ENCODE measurements at regions of chr19 and their contacts with region 1.

Region 1: DNA sequence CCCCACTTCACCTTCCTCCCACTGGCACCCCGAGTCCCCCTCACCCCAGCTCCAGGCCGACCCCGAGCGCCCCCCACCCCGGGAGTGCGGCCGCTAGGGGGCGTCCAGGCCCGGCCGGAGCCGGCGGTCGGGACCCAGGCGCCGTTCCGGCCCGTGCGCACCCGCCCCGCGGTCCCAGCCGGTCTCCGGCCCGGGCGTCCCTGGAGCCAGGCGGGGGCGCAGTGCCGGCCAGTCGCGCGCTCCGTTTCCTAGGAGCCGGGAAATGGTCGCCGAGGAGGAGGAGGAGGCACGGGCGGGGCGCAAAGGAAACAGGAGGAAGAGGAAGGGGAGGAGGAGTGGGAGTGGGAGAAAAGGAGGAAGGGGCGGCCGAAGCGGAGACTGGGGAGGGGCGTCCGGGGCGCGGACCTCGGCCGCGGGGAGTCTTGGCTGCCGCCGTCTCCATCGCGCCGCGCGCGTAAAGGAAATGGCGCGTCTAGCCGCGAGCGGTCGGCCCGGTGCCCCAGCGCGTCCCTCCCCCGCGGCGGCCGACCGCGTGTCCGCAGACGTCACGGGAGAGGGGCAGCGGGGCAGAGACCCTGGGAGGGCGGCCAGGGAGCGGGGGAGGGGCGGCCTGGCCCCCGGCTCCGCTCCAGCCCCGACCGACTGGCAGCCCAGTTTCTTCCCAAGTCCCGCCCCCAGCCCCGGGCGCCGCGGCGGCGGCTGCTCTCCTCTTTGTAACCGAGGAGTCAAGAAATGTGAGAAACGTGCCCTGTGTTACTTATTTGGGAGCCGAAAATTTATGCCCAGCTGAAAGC is 1.1 kb upstream of the KCTD15 start:
- DNase-seq: peak; percentile 64
- ATAC-seq: peak; percentile 64
- H3K4me3 Mint-ChIP-seq: peak overlapping the region; percentile 75
- H3K27ac Mint-ChIP-seq: peak overlapping the region; percentile 46
- H3K4me1 Mint-ChIP-seq: peaks cover 5% of the 10 kb centered on the region
- H3K27me3 Mint-ChIP-seq: peaks cover 19% of the 10 kb centered on the region
- CTCF ChIP-seq: no peak

Region 2: DNA sequence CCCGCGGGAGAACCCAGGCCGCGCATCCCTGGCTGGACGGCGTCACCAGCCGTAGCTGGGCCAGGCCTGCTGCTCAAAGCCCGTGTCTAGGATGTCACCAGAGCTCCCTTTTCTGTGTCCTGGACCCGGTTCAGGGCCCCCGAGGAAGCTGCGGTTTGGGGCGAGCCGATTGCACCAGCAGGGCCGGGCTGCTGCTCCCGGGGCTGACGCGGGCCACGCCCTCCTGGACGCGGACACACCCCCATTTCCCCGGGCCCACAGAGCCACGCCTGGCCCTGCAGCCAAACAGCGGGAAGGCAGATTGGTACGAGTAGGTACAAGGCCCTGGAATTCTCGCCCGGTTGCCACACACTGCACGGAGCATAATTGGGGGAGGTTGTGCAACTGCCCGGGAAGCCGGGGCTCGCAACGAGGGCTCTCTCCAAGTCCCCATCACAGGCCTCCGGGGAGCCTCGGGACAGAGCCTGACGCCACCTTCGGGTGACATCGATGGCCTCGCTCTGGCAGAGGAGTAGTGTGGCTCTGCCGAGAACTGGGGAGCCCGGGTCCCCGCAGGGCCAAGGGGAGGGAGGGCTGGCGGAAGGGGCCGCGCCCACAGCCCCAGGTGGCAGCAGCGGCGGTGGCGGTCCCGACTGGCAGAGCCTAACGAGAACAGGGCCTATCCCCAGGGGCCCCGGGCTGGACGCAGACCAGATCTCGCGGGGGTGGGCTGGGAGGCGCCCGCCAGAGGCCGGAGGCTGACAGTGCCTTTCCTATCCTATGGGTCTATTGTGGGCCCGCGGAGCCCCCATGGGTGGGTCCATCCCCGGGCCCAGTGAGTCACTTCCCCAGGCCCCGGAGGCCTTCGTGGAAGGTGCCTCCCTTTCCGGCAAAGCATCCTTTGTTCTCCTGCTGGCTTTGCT is 24.6 kb after region 1 on chr19:
- CTCF ChIA-PET with region 1: interaction called, 4 read pairs
- POLR2A ChIA-PET with region 1: interaction called, 3 read pairs
- intact Hi-C with region 1: loop called (anchors 2 kb)
- DNase-seq: peak; percentile 60
- ATAC-seq: peak; percentile 78
- H3K4me3 Mint-ChIP-seq: peak overlapping the region; percentile 85
- H3K27ac Mint-ChIP-seq: peak overlapping the region; percentile 41
- H3K4me1 Mint-ChIP-seq: peaks cover 36% of the 10 kb centered on the region
- H3K27me3 Mint-ChIP-seq: no peaks in the 10 kb centered on the region
- CTCF ChIP-seq: no peak

Region 3: DNA sequence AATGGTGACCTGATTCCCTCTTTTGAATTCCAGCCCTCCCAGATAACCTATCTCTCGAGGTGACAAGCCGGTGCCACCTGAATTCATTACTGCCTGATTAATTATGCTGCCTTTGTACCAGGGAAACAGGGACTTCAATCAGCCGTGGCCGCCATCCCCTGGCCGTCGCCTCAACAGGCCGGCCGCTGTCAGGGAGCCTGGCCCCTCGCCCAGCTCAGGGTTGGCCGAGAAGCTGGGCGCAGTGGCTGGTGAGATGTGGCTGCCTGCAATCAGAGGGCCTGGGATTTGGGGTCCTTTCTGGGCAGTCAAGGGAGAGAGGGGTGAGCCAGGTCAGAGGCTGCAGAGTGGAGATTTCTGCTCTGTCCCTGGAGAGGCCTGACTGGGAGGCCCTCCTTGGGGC is 92.3 kb after region 1 on chr19:
- CTCF ChIA-PET with region 1: no interaction called
- POLR2A ChIA-PET with region 1: no interaction called
- intact Hi-C with region 1: no loop called
- DNase-seq: no peak
- ATAC-seq: no peak
- H3K4me3 Mint-ChIP-seq: no peak overlapping the region
- H3K27ac Mint-ChIP-seq: no peak overlapping the region
- H3K4me1 Mint-ChIP-seq: peaks cover 2% of the 10 kb centered on the region
- H3K27me3 Mint-ChIP-seq: peaks cover 21% of the 10 kb centered on the region
- CTCF ChIP-seq: no peak

Region 4: DNA sequence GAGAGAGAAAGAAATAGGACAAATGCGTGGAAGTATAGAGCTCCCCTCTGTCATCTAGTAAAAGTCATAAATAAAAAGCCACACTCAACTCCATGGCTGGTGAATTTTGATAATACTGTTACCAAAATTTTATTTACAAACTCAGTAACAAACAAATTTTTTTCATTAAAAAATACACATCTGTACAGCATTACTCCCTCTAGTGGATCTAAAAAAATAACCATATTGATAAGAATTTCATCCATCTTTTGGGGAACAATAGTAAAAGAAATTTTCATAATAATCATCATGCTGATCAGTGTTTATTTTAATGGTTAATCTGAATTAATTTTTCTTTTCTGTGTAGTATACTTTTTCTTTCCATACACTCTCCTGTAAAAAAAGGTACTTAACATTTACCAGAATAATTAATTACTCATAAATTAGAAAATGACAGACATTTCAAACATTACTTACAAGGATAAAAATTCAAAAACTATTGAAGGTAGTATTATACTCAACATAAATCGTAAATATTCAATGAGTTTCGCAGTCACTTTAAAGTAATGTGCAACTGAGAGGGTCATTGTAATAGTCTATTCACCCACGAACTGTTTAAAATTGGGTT is 203.3 kb after region 1 on chr19:
- CTCF ChIA-PET with region 1: interaction called, 5 read pairs
- POLR2A ChIA-PET with region 1: no interaction called
- intact Hi-C with region 1: loop called (anchors 5 kb)
- DNase-seq: no peak
- ATAC-seq: no peak
- H3K4me3 Mint-ChIP-seq: no peak overlapping the region
- H3K27ac Mint-ChIP-seq: no peak overlapping the region
- H3K4me1 Mint-ChIP-seq: no peaks in the 10 kb centered on the region
- H3K27me3 Mint-ChIP-seq: peaks cover 14% of the 10 kb centered on the region
- CTCF ChIP-seq: no peak

Region 5: GRCh38 chr19:34096020-34096915 is 300.7 kb after region 1 on chr19:
- CTCF ChIA-PET with region 1: interaction called, 5 read pairs
- POLR2A ChIA-PET with region 1: no interaction called
- intact Hi-C with region 1: loop called (anchors 1 kb)
- DNase-seq: no peak
- ATAC-seq: no peak
- H3K4me3 Mint-ChIP-seq: no peak overlapping the region
- H3K27ac Mint-ChIP-seq: no peak overlapping the region
- H3K4me1 Mint-ChIP-seq: no peaks in the 10 kb centered on the region
- H3K27me3 Mint-ChIP-seq: peaks cover 17% of the 10 kb centered on the region
- CTCF ChIP-seq: peak; percentile 16

Region 6: DNA sequence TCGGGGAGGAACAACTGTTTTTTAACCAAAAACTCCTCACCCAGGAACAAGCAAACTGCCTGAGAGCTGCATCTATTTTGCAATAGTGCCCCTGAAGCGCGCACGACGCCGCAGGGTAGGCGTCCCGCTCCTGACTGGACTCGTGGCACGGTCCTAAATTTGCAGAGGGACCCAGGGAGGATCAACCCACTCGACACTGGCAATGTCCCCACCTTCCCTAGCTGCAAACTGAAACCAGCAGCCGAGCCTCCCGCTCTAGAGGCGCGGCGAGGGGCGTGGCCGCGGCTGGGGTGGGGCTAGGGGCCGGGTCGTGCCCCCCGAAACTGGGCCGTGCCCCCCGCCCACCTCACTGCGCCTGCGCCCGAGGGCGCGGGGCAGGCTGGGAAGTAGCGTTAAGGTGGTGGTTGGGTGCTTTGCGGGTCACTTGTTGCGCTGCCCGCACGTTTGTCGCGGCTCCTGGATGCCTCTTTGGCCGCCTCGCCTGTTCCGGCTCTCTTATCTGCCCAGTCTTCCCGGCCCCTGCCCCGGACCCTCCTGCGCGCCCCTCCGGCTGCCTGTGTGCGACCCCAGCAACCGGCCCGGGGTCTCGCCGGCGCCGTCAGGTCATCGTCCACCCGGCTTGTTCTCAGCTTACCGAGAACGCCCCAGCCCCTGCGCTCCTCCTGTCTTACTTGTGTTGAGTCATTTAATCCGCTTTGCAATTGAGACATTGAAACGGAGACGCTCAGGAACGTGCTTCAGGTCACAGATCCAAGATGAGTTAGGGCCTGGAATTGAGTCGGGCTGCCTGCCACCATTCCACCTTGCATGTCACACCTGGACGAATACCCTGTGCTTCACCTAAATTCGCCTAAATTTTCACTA is 338.9 kb after region 1 on chr19:
- CTCF ChIA-PET with region 1: no interaction called
- POLR2A ChIA-PET with region 1: interaction called, 6 read pairs
- intact Hi-C with region 1: loop called (anchors 1 kb)
- DNase-seq: peak; percentile 96
- ATAC-seq: peak; percentile 99
- H3K4me3 Mint-ChIP-seq: peak overlapping the region; percentile 93
- H3K27ac Mint-ChIP-seq: peak overlapping the region; percentile 91
- H3K4me1 Mint-ChIP-seq: peaks cover 5% of the 10 kb centered on the region
- H3K27me3 Mint-ChIP-seq: no peaks in the 10 kb centered on the region
- CTCF ChIP-seq: no peak

Region 7: GRCh38 chr19:34145741-34146202 is 350.2 kb after region 1 on chr19:
- CTCF ChIA-PET with region 1: interaction called, 3 read pairs
- POLR2A ChIA-PET with region 1: no interaction called
- intact Hi-C with region 1: loop called (anchors 5 kb)
- DNase-seq: no peak
- ATAC-seq: peak; percentile 65
- H3K4me3 Mint-ChIP-seq: no peak overlapping the region
- H3K27ac Mint-ChIP-seq: no peak overlapping the region
- H3K4me1 Mint-ChIP-seq: peaks cover 1% of the 10 kb centered on the region
- H3K27me3 Mint-ChIP-seq: peaks cover 3% of the 10 kb centered on the region
- CTCF ChIP-seq: peak; percentile 82

Region 8: GRCh38 chr19:34345947-34346351 is 550.4 kb after region 1 on chr19:
- CTCF ChIA-PET with region 1: no interaction called
- POLR2A ChIA-PET with region 1: no interaction called
- intact Hi-C with region 1: loop called (anchors 5 kb)
- DNase-seq: peak; percentile 49
- ATAC-seq: peak; percentile 81
- H3K4me3 Mint-ChIP-seq: no peak overlapping the region
- H3K27ac Mint-ChIP-seq: no peak overlapping the region
- H3K4me1 Mint-ChIP-seq: peaks cover 5% of the 10 kb centered on the region
- H3K27me3 Mint-ChIP-seq: no peaks in the 10 kb centered on the region
- CTCF ChIP-seq: no peak

Measured in activated B cell treated with CpG ODN at 0.5 μM for 24 hours (primary cell).